ENCODE measurements at regions of chr5 and their contacts with region 1.

Region 1: DNA sequence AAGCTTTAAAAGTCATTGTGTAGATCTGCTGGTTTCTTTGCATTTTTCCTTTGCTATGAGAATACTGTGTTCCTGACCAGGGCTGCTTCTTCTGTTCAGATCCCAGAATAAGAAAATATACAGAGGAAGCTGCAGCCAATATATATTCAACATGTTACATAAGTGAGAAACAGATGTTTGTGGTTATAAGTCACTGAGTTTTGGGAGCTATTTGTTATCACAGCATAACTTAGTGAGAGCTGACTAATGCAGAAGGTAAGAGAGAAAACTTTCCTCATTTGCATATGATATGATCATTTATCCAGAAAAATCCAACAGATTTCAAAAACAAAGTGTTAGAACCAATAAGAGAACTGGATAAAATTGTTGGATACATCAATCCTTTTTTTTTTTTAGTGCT is 136.3 kb upstream of the NR3C1 start:
- DNase-seq: no peak
- ATAC-seq: no peak
- H3K4me3 ChIP-seq: no peak overlapping the region
- H3K27ac ChIP-seq: no peak overlapping the region
- H3K4me1 ChIP-seq: no peaks in the 10 kb centered on the region
- H3K27me3 ChIP-seq: no peaks in the 10 kb centered on the region
- CTCF ChIP-seq: no peak
- EP300 ChIP-seq: no peak
- POLR2A ChIP-seq: no peak
- RAD21 ChIP-seq: no peak

Region 2: GRCh38 chr5:143551820-143552251 is 12.1 kb after region 1 on chr5:
- CTCF ChIA-PET with region 1: interaction called, 9 read pairs
- POLR2A ChIA-PET with region 1: no interaction called
- RAD21 ChIA-PET with region 1: no interaction called
- SMC1A ChIA-PET with region 1: interaction called, 10 read pairs
- in situ Hi-C with region 1: no loop called
- intact Hi-C with region 1: no loop called
- DNase-seq: no peak
- ATAC-seq: no peak
- H3K4me3 ChIP-seq: no peak overlapping the region
- H3K27ac ChIP-seq: no peak overlapping the region
- H3K4me1 ChIP-seq: peaks cover under 1% of the 10 kb centered on the region; the same call in 1 of the 2 replicates
- H3K27me3 ChIP-seq: no peaks in the 10 kb centered on the region
- CTCF ChIP-seq: no peak
- EP300 ChIP-seq: no peak
- POLR2A ChIP-seq: no peak
- RAD21 ChIP-seq: no peak

Region 3: DNA sequence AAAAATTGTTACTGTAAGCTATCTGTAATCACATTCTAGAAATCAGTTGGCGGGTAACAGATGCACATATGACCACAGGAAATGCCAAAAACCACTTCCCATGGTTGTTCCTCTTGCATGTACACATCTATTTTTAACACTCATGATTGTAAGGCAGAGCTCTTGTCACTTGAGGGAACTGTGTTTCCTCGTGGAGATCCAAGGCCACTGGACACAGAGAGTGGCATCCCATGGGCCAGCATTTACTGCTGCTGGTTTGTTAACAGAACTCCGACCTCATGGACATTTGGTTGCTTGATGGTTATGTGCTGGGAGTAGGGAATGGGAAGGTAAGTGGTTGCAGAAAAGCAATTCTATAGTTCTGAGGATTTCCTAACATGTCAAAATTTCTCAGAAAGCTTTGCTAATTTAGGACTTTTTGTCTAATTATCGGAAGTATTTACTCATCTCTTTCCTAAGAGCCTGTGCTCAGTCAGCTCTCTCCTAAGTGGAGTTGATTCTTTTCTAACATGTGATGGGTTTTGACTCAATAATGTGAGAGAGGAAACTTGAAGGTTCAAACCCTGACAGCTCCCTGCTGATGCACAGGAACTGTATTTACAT is 65.8 kb after region 1 on chr5:
- CTCF ChIA-PET with region 1: no interaction called
- POLR2A ChIA-PET with region 1: no interaction called
- RAD21 ChIA-PET with region 1: no interaction called
- SMC1A ChIA-PET with region 1: no interaction called
- in situ Hi-C with region 1: no loop called
- intact Hi-C with region 1: no loop called
- DNase-seq: peak; percentile 60
- ATAC-seq: peak; percentile 68
- H3K4me3 ChIP-seq: no peak overlapping the region; the same call in 1 of the 2 replicates
- H3K27ac ChIP-seq: peak overlapping the region; percentile 69
- H3K4me1 ChIP-seq: peaks cover 22% of the 10 kb centered on the region
- H3K27me3 ChIP-seq: no peaks in the 10 kb centered on the region
- CTCF ChIP-seq: no peak
- EP300 ChIP-seq: peak in 1 of 2 experiments; percentile 40; a peak in 2 of 4 replicates
- POLR2A ChIP-seq: no peak
- RAD21 ChIP-seq: 0 out of 2 replicates have a peak, but pooled peaks have one; percentile 9

Measured in GM12878 (cell line).